ENCODE measurements at regions of chr2 and their contacts with region 1.

Region 1: DNA sequence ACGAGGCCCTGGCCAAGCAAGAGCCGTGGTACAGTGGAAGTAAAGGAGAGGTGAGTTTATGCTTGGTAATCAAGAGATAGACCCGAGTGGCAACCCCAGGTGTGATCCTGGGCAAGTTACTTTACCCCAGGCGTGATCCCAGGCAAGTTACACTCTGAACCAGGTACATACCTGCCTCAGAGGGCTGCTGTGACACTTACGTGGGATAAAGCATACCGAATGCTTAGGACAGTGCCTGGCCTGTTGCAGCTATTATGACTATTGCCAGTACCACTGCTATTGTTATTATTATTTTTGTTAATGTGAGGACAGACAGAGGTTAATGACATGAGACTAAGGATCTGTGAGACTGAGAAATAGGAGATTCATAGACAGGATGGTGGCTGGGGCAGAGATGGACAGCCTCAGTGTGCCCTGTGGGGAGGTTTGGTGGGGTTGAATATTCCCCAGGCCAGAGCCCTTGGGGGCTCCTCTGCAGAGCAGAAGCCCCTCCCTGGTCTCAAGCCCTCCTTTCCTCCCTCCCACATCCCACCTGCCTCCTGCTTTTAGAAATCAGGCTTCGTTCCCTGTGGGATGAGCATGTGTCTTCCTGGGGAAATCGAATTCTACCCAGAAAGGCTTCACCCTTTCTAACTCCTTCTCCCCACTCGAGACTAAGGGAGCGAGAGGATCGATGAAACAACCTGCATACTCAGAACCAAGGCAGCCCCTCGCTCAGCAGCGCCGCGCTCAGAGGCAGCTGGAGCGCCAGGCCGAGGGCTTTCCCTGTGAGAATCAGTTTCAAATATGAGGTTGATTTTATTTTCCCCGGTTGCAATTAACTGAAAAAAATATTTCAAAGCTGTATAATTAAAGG is 62.0 kb upstream of the SIX3 start:
- DNase-seq: no peak
- H3K4me3 ChIP-seq: no peak overlapping the region
- H3K27ac ChIP-seq: no peak overlapping the region
- H3K4me1 ChIP-seq: no peaks in the 10 kb centered on the region
- H3K27me3 ChIP-seq: no peaks in the 10 kb centered on the region
- CTCF ChIP-seq: no peak

Region 2: GRCh38 chr2:44821500-44821899 is 58.0 kb before region 1 on chr2:
- CTCF ChIA-PET with region 1: no interaction called
- dilution Hi-C with region 1: loop called (anchors 5 kb)
- in situ Hi-C with region 1: no loop called
- intact Hi-C with region 1: no loop called
- DNase-seq: no peak
- H3K4me3 ChIP-seq: no peak overlapping the region
- H3K27ac ChIP-seq: no peak overlapping the region
- H3K4me1 ChIP-seq: no peaks in the 10 kb centered on the region
- H3K27me3 ChIP-seq: peaks cover 2% of the 10 kb centered on the region
- CTCF ChIP-seq: no peak